ENCODE measurements at regions of chr13 and their contacts with region 1.

Region 1: DNA sequence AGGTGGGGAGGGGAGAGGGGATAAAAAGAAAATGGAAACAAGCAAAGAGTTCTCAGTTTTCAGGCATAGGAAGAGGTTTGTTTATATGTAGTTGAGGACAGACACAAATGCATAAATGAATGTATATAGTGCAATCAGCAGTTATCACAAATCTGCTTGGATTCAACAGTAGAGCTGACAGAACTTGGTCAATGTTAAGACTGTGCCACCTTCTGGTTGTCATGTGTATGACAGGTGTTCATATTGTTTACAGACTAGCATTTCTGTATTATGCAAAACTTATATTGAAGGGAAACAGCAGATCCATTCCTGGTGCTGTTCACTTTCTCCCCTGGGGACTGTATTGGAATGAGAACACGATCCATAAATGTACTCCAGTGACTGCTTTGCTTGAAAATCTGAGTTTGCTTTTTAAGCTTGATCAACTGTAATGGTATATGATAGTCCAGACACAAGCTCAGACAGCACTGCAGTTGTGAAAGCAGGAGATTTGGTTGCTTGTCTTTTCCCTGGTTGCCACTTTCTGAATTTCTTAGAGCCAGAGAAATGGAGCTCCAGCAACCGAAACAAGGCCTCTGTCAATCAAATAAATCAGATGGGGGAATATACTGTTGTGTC is 319.5 kb upstream of the OBI1 start:
- DNase-seq: no peak

Region 2: GRCh38 chr13:78137404-78138142 is 840.9 kb before region 1 on chr13:
- intact Hi-C with region 1: loop called in 1 of 2 experiments (anchors 5 kb)
- DNase-seq: no peak